Activated T-helper 2 cell treated with anti-CD3 and anti-CD28 coated beads, Interferon-gamma antibody, Interleukin-2, Interleukin-4, amounts not matched to agents 10 μg/mL and 5 μg/mL and 100 μg/mL, durations not matched to agents 14 hours and 24 hours and 36 hours (primary cell): ENCODE measurements at regions of chr20 and their contacts with region 1.

Region 1: GRCh38 chr20:17682103-17682888 is at the start of gene RRBP1:
- DNase-seq: peak; percentile 96
- H3K4me3 Mint-ChIP-seq: peak within 1 kb of the TSS; percentile 84
- H3K27ac Mint-ChIP-seq: peak within 1 kb of the TSS; percentile 84
- H3K4me1 Mint-ChIP-seq: peaks cover 30% of the 10 kb centered on the region
- H3K27me3 Mint-ChIP-seq: peaks cover 30% of the 10 kb centered on the region
- total RNA-seq, gene RRBP1: 73.1 and 73.6 TPM in 2 replicates

Region 2: DNA sequence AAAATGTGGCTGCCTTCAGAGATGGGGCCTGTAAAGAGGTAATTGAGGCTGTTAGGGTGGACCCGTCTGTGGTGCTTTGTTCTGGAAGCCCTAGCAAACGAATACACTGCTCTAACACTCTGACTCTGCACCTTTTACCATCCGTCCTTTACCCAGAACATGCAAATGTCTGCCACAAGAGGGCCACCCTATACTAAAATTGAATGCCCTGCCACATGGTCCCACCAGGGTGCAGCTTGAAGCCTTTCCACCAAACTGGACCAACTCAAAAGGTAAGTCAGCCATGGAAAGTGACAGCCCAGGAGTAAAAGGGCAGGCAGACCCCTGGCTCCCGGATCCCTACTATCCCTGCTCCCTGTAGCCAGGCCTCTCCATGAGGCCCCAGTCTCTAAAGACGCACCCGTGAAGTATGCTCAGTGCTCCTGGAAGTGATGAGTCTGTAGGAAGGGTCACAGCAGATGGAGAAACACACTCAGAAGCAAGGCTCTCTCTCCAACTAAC is 145.3 kb before region 1 on chr20:
- intact Hi-C with region 1: loop called (anchors 5 kb)
- DNase-seq: peak; percentile 61
- H3K4me3 Mint-ChIP-seq: no peak overlapping the region
- H3K27ac Mint-ChIP-seq: no peak overlapping the region
- H3K4me1 Mint-ChIP-seq: peaks cover 26% of the 10 kb centered on the region
- H3K27me3 Mint-ChIP-seq: peaks cover 22% of the 10 kb centered on the region

Region 3: GRCh38 chr20:17648791-17649730 is 33.2 kb before region 1 on chr20:
- intact Hi-C with region 1: no loop called
- DNase-seq: no peak
- H3K4me3 Mint-ChIP-seq: no peak overlapping the region
- H3K27ac Mint-ChIP-seq: no peak overlapping the region
- H3K4me1 Mint-ChIP-seq: peaks cover 8% of the 10 kb centered on the region
- H3K27me3 Mint-ChIP-seq: no peaks in the 10 kb centered on the region

Region 4: GRCh38 chr20:17662333-17663039 is 19.8 kb before region 1 on chr20:
- intact Hi-C with region 1: loop called (anchors 2 kb)
- DNase-seq: no peak
- H3K4me3 Mint-ChIP-seq: no peak overlapping the region
- H3K27ac Mint-ChIP-seq: peak overlapping the region; percentile 61
- H3K4me1 Mint-ChIP-seq: peaks cover 60% of the 10 kb centered on the region
- H3K27me3 Mint-ChIP-seq: no peaks in the 10 kb centered on the region

Region 5: GRCh38 chr20:17749975-17750721 is 67.9 kb after region 1 on chr20:
- intact Hi-C with region 1: no loop called
- DNase-seq: no peak
- H3K4me3 Mint-ChIP-seq: no peak overlapping the region
- H3K27ac Mint-ChIP-seq: no peak overlapping the region
- H3K4me1 Mint-ChIP-seq: peaks cover 4% of the 10 kb centered on the region
- H3K27me3 Mint-ChIP-seq: peaks cover 7% of the 10 kb centered on the region

Region 6: DNA sequence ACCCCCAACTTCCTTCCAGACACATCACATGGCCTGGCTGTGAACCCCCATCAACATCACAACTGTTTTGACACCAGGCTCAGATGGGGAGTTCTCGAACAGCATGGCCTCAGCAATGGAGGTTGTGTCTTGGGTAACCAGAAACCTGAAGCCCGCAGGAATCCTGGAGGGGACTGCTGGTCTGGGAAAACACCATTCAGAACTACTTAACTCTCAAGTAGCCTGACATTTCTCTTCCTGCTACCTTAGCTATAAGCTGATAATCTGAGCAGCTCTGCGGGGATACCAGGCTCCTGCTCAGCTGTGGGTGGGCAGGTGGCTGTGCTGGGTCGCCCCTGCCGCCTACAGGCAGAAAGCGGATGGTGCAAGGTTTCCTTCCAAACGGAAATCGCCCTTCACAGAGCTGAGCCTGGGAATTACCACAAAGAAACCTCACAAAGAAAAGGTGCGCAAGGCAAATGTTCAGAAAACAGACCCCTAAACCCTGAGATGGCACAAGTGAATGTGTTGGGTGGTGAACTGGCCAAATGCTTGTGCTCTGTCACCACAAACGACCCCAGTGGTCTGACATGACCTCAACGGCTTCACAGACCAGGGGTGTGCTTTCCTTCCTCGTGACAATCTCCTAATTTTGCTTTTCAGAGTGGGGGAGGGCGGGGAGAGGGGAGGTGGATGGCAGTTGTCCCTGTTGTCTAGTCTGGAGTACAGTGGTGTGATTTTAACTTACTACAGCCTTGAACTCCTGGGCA is 256.7 kb after region 1 on chr20:
- intact Hi-C with region 1: loop called (anchors 1 kb)
- DNase-seq: peak; percentile 41
- H3K4me3 Mint-ChIP-seq: no peak overlapping the region
- H3K27ac Mint-ChIP-seq: peak overlapping the region; percentile 52
- H3K4me1 Mint-ChIP-seq: peaks cover 22% of the 10 kb centered on the region
- H3K27me3 Mint-ChIP-seq: no peaks in the 10 kb centered on the region

Region 7: DNA sequence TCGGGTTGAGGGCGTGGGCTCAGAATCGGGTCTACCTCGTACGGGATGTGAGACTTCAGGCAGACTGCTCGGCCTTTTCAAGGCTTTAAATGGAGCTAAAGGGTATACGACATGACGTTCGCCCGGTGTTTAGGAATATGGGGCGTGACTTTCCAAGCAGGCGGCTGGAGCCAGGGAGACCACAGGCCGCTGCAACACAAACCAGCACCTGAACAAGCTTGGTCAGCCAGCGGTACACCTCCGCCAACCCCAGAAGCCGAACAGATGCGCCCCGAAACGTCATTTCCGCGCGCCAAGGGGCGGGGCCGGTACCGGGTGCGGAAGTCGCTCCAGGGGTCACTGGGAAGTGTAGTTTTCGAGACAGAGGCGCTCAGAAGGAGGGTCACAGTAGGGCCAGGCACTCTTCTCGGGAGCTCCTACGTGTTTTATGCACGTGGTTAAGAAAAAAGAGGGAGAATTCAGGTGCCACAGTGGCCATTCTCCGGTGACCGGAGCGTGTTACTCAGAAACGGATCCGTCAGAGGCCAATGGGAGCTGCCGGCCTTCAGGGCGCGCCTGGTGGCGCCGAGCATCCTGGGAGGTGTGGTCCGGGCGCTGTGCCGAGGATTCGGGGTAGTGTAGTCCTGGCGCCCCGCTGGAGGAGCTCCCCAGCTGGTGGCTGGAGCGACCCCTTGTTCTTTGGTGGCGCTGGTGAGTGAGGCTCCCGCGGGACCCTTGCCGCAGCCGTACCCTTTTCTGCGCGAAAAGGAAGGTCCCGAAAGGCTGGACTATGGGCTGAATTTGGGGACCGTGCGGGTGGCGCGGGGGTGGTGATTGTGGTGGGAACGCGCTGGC is 605.8 kb after region 1 on chr20 and contains the start of gene ZNF133:
- intact Hi-C with region 1: loop called (anchors 5 kb)
- DNase-seq: peak; percentile 94
- H3K4me3 Mint-ChIP-seq: peak within 1 kb of the TSS; percentile 97
- H3K27ac Mint-ChIP-seq: peak within 1 kb of the TSS; percentile 97
- H3K4me1 Mint-ChIP-seq: peaks cover 18% of the 10 kb centered on the region
- H3K27me3 Mint-ChIP-seq: peaks cover 8% of the 10 kb centered on the region
- total RNA-seq, gene ZNF133: 8.7 and 10.0 TPM in 2 replicates